ENCODE measurements at regions of chr11 and their contacts with region 1.

Region 1: DNA sequence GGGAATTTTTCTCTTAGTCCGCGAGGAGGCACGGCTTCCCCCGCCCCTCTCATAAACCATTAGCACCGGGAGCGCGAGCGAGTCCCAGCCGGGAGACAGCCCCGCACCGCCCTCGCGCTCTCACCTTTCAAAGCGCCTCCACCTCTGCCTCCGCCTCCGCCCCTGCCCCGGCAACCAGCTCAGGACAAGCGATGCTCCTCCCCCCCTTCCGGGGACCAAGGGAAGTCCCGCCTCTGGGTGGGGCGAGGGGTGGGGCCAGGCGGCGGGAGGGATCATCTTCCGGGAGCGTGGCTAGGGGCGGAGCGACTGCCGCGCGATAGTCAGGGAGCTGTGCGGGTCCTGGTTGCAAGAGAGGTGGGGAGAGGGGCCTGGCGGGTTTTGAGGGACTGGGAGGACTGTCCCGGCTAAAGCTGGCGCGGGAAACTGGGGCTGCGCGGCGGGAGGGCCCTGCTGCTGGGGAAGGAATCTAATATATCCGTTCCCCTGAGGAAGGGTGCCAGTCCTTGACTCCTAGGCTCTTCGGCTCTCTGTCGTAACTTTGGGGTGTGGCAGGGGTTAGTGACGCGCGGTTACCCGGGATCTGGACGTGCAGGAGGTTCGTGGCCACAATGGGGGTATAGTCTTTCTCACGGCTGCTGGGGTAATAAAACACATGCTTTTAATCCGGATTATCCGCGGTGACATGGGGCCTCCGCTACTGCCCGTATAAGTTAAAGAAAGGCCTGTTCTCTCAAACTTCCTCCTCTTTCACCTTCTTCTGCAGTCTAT is at the starts of genes CCDC82 and JRKL:
- DNase-seq: peak; percentile 97
- ATAC-seq: peak; percentile 100
- total RNA-seq, gene CCDC82: 12.7 TPM
- total RNA-seq, gene JRKL: 6.5 TPM

Region 2: DNA sequence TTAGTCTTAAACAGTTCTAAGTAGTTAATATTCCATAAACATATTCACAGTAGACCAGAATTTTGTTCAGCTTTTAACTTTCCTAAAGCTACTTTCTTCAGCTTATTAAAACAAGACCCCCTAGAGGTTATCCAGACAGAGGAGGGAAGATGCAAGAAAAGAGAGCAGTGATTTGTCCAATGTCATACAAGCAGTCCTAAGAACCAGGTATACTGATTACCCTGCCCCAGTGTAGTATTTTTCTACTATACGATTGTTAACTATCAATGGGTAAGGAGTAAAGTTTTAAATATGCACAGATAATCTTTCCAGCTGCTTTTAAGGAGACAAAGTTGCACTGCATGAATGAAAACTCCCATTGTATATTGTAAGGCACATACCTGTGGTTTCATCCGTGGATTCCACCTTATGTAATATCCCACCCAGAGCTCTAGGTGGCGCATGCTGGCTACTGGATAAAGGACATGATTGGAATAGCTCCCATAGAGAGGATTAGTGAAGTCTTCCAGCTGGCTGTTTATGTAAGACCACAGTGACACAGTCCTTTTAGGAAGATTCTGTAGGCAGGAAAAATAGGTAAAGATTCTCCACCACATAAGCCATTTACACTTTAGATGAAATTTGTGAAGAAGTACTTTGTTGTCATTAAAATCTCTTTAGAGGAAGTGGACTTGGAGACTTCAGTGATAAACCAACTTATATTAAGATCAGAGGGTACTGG is 554.0 kb before region 1 on chr11:
- intact Hi-C with region 1: loop called (anchors 5 kb)
- DNase-seq: peak; percentile 47
- ATAC-seq: peak; percentile 98